ENCODE measurements at regions of chr3 and their contacts with region 1.

Region 1: DNA sequence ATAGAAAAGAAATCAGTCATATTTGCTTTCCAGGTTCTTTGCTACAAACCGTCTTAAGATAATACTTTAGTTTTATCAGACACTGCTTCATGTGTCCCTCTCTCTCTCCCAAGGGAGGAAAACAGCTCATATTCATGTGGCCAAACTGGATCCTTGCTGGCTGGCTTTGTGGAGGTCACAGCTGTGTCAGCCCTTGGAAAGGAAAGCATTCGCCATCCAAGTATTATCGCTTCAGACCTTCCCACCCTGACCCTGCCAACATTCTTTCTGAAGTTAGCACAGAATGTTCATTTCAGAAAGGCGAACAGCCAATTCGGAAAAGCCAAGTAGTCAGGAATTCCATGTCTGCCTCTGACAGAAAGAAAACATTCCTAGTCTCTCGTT is 213.6 kb downstream of the FEZF2 start:
- DNase-seq: peak; percentile 65 to 89 (median 83)
- ATAC-seq: peak; percentile 94 to 96 (median 96)
- H3K4me3 ChIP-seq: no peak overlapping the region
- H3K27ac ChIP-seq: peak overlapping the region; percentile 80 to 93 (median 88)
- H3K4me1 ChIP-seq: peaks cover 6 to 75% (median 53%) of the 10 kb centered on the region in 12 donors
- H3K27me3 ChIP-seq: no peaks in the 10 kb centered on the region
- CTCF ChIP-seq: no peak
- POLR2A ChIP-seq: no peak

Region 2: GRCh38 chr3:62097121-62097520 is 62.6 kb before region 1 on chr3:
- intact Hi-C with region 1: loop called in 2 of 10 experiments (anchors 5 kb)
- DNase-seq: no peak
- ATAC-seq: peak; percentile 85 to 89 (median 88)
- H3K4me3 ChIP-seq: peak overlapping the region in 1 of 12 donors; percentile 5
- H3K27ac ChIP-seq: peak overlapping the region; percentile 63 to 85 (median 75)
- H3K4me1 ChIP-seq: peaks cover 2 to 57% (median 27%) of the 10 kb centered on the region in 12 donors
- H3K27me3 ChIP-seq: no peaks in the 10 kb centered on the region
- CTCF ChIP-seq: no peak
- POLR2A ChIP-seq: no peak

Measured in heart left ventricle (tissue), 16 donors.